ENCODE measurements at regions of chr1 and their contacts with region 1.

Region 1: DNA sequence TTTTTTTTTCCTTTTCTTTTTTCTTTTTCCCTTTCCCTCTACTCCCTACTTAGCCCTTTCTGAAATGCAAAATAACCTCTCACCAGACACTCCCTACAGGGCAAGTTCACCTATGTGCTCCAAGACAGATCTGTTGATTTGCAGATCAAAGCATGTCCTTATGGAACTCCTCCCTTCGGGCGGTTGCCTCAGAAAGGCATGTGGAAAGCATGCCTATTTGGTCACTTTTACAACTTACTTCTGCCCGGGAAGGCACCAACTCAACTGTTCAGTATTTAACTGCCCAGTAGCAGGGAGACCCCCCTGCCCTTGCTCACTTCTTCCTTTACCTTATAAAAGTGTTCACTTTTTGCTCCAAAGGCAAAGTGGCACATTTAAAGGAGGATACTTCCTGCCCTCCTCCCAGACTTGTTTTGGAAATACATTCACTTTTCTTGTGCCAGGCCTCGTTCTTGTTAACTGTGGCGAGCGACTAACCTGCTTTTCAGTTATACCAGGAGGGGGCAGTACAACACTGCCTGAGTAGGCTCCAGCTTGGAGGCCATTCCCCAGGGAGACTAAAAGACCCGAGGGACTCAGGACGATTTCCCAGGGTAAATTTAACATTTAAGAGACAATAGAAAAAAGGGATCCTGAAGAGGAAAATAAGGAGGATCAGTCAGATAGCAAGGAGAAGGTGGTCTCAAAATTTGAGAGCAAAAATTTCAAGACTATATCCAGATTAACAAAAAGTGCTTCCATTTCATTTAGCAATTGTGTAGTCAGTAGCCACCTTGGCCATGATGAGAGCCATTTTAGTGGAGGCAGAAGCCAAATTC is 12.3 kb upstream of the SLAMF7 start:
- DNase-seq: peak in 8 of 10 donors; percentile 11 to 62 (median 52)
- H3K4me3 ChIP-seq: peak overlapping the region in 2 of 59 donors; percentile 5 to 14
- H3K27ac ChIP-seq: no peak overlapping the region
- H3K27me3 ChIP-seq: peaks cover 0 to 15% (median 0%) of the 10 kb centered on the region in 45 donors
- CTCF ChIP-seq: peak; percentile 60 to 94 (median 82)

Region 2: GRCh38 chr1:160891474-160891873 is 164.8 kb after region 1 on chr1:
- intact Hi-C with region 1: no loop called
- DNase-seq: no peak
- H3K4me3 ChIP-seq: no peak overlapping the region
- H3K27ac ChIP-seq: no peak overlapping the region
- H3K27me3 ChIP-seq: peaks cover 0 to 8% (median 0%) of the 10 kb centered on the region in 45 donors
- CTCF ChIP-seq: no peak

Region 3: DNA sequence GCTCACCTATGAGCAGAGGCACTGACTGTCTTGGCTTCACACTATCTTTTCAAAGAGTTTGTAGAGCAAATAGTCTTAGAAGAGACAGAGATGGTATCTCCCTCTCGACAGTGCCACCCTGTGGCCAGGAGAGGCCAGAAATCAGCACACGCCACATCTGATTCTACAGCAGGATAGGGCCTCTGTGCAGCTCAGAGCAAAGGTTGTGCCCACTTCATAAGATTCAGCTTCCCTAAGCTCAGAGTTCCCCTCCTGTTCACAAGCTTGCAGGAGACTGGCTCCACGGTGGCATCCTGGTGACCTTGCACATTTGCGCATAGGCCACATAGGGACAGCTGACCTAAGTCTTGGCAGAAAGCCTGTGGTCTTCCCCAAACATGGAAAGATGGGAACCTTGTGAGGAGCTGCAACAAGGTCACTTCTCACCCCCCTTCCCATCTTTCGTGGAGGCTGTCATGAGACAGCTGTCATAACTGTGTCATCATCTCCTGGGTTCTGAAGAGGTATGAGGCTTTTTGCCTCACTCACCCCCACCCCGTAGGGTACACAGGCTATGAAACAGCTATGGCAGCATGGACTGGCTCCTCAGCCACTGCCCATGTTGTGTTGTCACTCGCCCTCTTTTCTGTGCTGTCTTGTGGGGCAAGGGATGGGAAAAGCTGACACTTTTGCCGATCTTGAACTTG is 224.9 kb after region 1 on chr1:
- intact Hi-C with region 1: loop called in 1 of 2 experiments (anchors 5 kb)
- DNase-seq: peak in 8 of 10 donors; percentile 6 to 67 (median 54)
- H3K4me3 ChIP-seq: no peak overlapping the region
- H3K27ac ChIP-seq: no peak overlapping the region
- H3K27me3 ChIP-seq: peaks cover 0 to 4% (median 0%) of the 10 kb centered on the region in 45 donors
- CTCF ChIP-seq: peak in 55 of 56 donors; percentile 35 to 75 (median 61)

Region 4: DNA sequence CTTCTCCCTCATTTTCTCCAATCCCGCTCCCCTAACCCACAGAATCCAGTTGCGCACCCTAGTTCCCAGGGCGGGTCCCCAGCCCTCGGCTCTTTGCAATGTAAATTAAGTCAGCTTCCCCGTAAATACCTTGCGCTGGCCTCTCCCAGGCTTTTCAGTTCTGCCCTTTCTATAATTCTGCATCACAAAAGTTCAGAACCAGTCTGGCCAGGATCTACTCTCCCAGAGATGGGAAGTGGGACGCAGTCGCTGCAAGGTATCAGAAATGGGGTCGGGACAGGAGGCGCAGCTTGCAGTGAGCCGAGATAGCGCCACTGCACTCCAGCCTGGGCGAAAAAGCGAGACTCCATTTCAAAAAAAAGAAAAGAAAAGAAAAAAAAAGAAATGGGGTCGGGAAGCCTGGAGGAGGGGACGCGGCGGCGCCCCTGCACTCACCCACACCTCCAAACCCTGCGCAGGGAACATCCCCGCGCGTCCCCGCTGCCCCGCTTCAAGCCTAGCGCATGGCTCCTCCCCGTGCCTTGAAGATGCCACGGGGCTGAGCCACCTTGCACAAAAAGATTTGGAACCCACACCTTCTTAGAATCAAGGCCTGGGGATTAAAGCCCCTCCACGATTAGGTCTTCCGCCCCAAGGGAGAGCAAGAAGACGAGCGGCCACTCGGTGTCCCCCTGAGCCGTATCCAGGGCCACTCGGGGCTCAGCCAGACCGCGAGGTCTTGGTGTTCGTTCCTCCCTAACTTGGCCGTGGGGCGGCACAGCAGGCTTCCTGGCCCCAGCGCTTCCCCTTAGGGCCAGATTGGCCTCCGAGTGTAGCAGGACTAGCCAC is 255.1 kb after region 1 on chr1:
- intact Hi-C with region 1: loop called in 1 of 2 experiments (anchors 10 kb)
- DNase-seq: no peak
- H3K4me3 ChIP-seq: peak overlapping the region in 58 of 59 donors; percentile 15 to 68 (median 46)
- H3K27ac ChIP-seq: no peak overlapping the region
- H3K27me3 ChIP-seq: peaks cover 0 to 33% (median 7%) of the 10 kb centered on the region in 45 donors
- CTCF ChIP-seq: no peak

Region 5: DNA sequence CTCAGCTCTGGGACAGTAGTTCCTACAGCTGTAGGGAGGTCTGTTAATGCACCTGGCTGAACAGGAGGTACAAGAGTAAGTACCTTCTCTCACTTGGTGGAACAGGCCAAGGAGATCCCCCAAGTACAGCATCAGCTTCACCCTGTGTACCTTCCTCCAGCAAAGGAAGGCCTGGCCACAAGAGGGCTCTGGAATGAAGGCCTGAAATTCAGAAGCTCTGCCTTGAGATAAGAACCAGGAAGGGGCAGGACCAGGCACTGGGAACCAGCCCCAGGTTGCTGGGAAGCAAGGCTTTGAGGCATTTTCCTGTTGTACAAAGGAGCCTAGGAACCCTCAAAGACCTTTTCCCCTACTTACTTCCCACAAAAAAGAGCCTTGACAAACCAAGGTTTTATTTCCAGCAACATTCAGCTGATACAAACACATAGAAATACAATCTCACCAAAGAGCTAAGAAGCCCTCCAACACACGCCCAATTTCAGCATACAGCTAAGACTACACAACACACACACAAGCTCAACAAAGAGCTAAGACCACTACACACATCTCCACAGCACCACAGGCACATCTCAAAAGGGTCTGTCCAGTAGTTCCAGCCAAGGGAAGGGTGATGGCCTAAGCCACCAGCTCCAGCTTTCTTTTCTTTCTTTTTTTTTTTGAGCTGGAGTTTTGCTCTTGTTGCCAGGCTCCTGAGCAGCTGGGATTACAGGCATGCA is 270.8 kb after region 1 on chr1:
- intact Hi-C with region 1: loop called in 1 of 2 experiments (anchors 5 kb)
- DNase-seq: peak in 8 of 10 donors; percentile 5 to 58 (median 46)
- H3K4me3 ChIP-seq: no peak overlapping the region
- H3K27ac ChIP-seq: peak overlapping the region in 22 of 59 donors; percentile 6 to 78 (median 42)
- H3K27me3 ChIP-seq: no peaks in the 10 kb centered on the region
- CTCF ChIP-seq: peak in 53 of 56 donors; percentile 29 to 67 (median 52)

Measured in dorsolateral prefrontal cortex (tissue), 120 donors.